Astrocyte of the cerebellum (primary cell): ENCODE measurements at regions of chr22 and their contacts with region 1.

Region 1: DNA sequence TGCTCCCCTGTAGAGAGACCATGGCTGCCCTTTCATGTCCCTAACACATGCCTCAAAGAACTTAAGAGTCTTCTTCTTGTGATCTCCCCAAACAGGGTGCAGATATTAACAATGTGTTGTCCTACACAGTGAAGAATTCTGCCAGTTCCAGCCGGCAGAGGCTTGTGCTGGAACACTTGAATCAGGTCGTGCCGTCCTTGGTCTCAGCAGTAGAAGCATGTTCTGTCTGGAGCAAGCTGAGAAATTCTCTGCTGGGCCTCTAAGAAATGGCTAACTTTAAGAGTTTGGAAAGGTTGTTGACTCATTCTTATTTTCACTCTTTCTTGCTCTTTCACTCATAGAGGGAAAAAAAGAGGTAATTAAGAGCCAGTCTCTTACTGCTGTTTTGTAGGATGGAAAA is 71.1 kb upstream of the SLC25A18 start:
- DNase-seq: no peak
- H3K4me3 ChIP-seq: no peak overlapping the region
- CTCF ChIP-seq: no peak

Region 2: DNA sequence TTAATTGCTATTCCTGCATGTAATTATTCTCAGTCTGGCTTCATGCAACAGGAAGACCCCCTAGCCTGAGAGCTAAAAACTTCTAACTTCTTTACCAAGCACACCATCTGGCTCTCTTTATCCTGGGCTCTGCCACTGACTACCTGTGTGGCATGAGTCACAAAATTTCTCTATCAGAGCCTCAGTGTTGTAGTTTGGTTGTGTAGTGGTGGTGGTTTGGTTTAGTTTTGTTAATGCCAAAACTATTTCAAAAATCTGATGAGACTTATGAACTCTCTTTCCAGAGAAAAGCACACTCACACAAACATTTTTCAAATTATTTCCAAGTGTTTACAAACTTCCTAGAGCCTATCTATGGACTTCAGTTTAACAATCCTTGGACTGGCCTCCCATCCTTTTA is 415.0 kb before region 1 on chr22:
- in situ Hi-C with region 1: loop called (anchors 10 kb)
- DNase-seq: peak; percentile 79
- H3K4me3 ChIP-seq: no peak overlapping the region
- CTCF ChIP-seq: no peak

Region 3: DNA sequence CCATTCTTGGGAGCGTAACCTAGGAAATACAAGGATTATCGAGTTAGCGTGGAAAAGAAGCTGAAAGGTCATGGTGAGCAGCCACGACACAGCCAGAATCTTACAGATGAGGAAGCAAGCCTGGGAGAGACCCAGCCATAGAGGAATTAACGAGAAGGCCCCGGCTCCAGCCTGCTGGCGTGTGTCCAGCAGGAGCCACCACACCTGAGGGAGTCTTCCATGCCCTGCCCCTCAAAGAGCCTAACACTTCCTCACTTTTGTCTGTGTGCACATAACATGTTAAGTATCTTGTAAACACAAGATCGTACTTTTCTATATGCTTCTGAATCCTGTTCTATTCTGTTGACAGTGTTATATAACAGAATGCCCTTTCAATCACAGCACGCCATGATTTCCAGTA is 104.9 kb before region 1 on chr22:
- in situ Hi-C with region 1: no loop called
- DNase-seq: no peak
- H3K4me3 ChIP-seq: no peak overlapping the region
- CTCF ChIP-seq: no peak

Region 4: DNA sequence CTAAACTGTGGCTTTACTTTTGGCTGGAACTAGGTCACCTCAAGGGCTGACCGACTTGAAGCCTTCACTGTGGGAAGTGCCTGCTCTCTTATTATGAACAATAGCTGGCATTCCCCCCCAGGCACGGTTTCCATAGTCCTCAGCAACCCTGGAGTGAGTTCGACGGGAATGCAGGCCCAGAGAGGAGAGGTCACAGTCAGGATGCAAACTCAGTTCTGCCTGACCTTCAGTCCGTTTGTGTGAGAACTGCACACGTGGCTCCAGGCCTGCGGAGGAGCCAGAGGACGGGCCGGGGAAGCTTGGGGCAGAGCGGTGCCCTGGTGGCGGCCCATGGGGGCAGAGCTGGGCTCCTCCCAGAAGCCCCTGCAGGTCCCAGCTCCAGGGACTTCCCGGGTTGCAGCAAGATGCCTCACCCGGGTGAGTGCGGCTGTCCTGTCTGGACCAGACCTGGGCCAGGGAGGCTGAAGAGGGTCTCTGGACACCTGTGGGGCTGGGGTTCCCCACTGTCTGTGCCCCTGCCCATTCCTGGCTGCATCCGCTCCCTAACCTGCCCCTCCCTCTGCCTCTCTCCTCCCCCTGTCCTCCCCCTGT is 88.3 kb after region 1 on chr22:
- in situ Hi-C with region 1: no loop called
- DNase-seq: no peak
- H3K4me3 ChIP-seq: no peak overlapping the region
- CTCF ChIP-seq: no peak